Sigmoid colon (tissue), 7 donors: ENCODE measurements at regions of chr18 and their contacts with region 1.

Region 1: GRCh38 chr18:55405893-55406406 is 182.0 kb downstream of the TCF4 start:
- DNase-seq: peak; percentile 92
- H3K4me3 ChIP-seq: no peak overlapping the region
- H3K27ac ChIP-seq: peak overlapping the region; percentile 73 to 83 (median 78)
- H3K4me1 ChIP-seq: peaks cover 0 to 42% (median 16%) of the 10 kb centered on the region in 4 donors
- H3K27me3 ChIP-seq: no peaks in the 10 kb centered on the region
- CTCF ChIP-seq: peak in 1 of 4 experiments; percentile 37
- EP300 ChIP-seq: peak in 2 of 4 donors; percentile 5 to 26
- POLR2A ChIP-seq: no peak

Region 2: GRCh38 chr18:55161916-55162315 is 244.0 kb before region 1 on chr18:
- intact Hi-C with region 1: no loop called
- DNase-seq: no peak
- H3K4me3 ChIP-seq: no peak overlapping the region
- H3K27ac ChIP-seq: no peak overlapping the region
- H3K4me1 ChIP-seq: peaks cover 0 to 11% (median 4%) of the 10 kb centered on the region in 4 donors
- H3K27me3 ChIP-seq: no peaks in the 10 kb centered on the region
- CTCF ChIP-seq: no peak
- EP300 ChIP-seq: no peak
- POLR2A ChIP-seq: no peak

Region 3: DNA sequence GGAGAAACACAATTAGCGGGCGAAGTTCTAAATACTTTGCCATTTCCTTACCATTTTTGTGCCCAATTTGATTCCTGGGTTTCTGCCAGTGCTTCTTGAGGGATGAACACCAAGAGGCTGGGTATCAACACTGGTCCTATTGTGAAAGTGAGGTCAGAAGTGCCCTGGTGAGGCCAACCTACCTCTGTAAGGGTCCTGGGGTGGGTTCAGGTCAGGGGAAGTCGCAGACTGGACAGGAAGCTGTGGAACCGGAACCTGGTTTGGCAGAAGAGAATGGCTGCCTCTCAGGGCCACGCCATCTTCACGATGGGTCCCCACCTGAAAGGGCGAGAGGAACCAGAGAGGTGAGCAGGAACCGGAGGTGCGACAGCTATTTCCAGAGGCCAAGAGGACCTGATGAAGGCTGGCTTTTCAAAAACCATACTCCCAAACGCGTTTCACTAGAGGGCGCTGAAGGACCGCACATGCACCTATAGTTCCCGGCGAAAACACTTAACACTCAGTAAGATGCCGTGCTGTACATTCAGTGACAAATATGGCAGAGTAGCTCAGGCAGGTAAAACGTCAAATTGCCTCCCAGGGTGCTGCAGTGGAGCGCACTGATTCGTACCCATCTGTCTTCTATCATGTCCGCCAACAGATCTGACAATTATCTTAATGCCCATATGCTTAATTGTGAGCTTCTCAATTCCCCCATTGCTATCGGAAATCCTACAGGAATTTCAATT is 171.4 kb before region 1 on chr18:
- intact Hi-C with region 1: loop called (anchors 5 kb)
- DNase-seq: peak; percentile 85
- H3K4me3 ChIP-seq: no peak overlapping the region
- H3K27ac ChIP-seq: peak overlapping the region; percentile 19 to 51 (median 39)
- H3K4me1 ChIP-seq: peaks cover 0 to 17% (median 8%) of the 10 kb centered on the region in 4 donors
- H3K27me3 ChIP-seq: no peaks in the 10 kb centered on the region
- CTCF ChIP-seq: peak; percentile 57 to 77 (median 76)
- EP300 ChIP-seq: no peak
- POLR2A ChIP-seq: no peak

Region 4: DNA sequence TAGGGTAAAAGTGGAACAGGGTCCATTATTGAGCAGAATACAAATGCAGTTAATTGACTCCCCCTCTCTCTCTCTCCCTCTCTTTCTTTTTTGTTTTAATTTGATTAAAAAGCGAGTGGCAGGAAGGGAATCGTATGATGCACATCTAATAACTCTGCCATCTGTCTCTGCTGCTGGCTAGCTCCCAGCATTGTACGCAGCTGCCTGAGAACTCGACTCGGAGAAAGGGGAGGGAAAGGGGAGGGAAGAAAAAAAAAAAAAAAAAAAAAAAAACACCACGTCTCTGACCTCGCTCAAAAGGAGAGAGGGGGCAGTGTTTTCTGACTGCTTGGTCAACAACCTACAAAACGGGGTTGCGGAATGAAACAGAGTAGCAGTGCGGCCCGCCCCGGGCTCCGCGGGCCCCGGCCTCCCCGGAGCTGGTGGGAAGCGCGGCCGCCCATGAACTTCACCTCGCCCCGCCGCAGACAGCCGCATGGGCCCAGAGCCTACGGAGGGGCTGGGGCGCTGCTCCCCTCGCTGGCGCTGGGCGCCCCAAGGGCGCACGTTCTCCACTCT is 83.7 kb before region 1 on chr18:
- intact Hi-C with region 1: loop called (anchors 5 kb)
- DNase-seq: peak; percentile 96
- H3K4me3 ChIP-seq: peak overlapping the region; percentile 48 to 63 (median 56)
- H3K27ac ChIP-seq: peak overlapping the region; percentile 88 to 98 (median 90)
- H3K4me1 ChIP-seq: peaks cover 0 to 36% (median 25%) of the 10 kb centered on the region in 4 donors
- H3K27me3 ChIP-seq: no peaks in the 10 kb centered on the region
- CTCF ChIP-seq: no peak
- EP300 ChIP-seq: peak in 1 of 4 donors; percentile 25
- POLR2A ChIP-seq: peak; percentile 26 to 59

Region 5: GRCh38 chr18:55351980-55352714 is 53.8 kb before region 1 on chr18:
- intact Hi-C with region 1: loop called (anchors 5 kb)
- DNase-seq: no peak
- H3K4me3 ChIP-seq: no peak overlapping the region
- H3K27ac ChIP-seq: peak overlapping the region in 2 of 4 donors; percentile 21 to 54
- H3K4me1 ChIP-seq: peaks cover 0 to 60% (median 42%) of the 10 kb centered on the region in 4 donors
- H3K27me3 ChIP-seq: no peaks in the 10 kb centered on the region
- CTCF ChIP-seq: no peak
- EP300 ChIP-seq: no peak
- POLR2A ChIP-seq: no peak

Region 6: DNA sequence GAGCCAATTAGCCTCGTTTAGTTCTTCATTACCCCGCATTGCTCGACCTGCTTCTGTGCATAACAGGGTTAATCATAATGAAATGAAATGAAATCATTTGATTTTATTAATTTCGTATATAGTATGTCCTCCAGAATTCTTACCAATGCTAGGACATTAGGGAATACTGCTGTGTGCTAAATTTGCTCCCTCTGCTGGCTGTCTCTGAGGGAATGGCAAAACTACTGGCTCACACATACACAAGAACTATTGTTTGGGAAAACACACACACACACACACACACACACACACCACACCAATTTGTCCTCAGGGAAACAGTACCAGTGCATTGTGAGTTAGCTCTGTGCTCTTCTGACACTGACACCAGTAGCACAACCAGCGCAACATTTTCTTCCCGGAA is 455.3 kb after region 1 on chr18:
- intact Hi-C with region 1: loop called (anchors 10 kb)
- DNase-seq: no peak
- H3K4me3 ChIP-seq: no peak overlapping the region
- H3K27ac ChIP-seq: no peak overlapping the region
- H3K4me1 ChIP-seq: peaks cover 0 to 13% (median 1%) of the 10 kb centered on the region in 4 donors
- H3K27me3 ChIP-seq: no peaks in the 10 kb centered on the region
- CTCF ChIP-seq: peak in 1 of 4 experiments; percentile 19
- EP300 ChIP-seq: no peak
- POLR2A ChIP-seq: no peak

Region 7: DNA sequence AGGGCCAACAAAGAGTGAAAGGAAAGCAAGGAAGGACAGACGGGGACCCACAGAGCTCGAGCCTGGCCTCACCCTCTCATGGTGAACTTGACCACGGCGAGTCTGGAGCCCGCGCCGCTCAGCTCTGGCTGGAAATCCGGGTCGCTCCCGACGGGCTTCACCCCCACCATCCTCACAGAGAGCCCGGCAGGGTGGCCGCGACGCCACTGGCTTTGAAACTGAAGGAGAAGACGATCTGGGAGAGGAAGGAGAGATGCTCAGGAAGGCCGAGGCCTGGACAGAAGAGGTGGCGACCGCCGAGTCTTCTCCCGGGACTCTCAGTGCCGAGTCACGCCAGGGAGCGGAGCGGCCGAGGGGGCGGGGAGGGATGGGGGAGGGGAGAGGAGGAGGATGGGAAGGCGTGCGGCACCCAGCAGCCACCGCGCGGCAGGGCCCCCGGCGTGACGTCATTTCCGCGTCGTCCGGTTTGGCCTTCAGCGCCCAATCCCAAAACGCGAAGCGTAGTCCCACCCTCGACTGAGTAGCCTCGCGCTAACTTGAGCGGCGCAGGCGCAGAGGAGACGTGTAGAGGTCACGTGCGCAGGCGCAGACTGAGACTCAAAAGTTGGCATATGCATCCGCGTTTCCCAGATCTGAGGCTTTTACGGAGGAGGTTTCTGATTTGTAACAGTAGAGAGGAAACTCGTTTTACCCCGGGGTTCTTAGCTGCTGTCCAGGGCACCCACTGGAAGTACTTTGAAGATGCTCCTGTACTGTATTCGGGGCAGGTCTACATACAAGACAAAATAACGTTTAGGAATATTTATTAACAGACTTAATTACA is 1232.5 kb after region 1 on chr18 and contains the start of gene TXNL1:
- intact Hi-C with region 1: loop called (anchors 10 kb)
- DNase-seq: peak; percentile 100
- H3K4me3 ChIP-seq: peak within 1 kb of the TSS; percentile 86 to 93 (median 91)
- H3K27ac ChIP-seq: peak within 1 kb of the TSS; percentile 93 to 99 (median 97)
- H3K4me1 ChIP-seq: peaks cover 0 to 37% (median 27%) of the 10 kb centered on the region in 4 donors
- H3K27me3 ChIP-seq: no peaks in the 10 kb centered on the region
- CTCF ChIP-seq: no peak
- EP300 ChIP-seq: peak in 2 of 4 donors; percentile 45 to 81
- POLR2A ChIP-seq: peak; percentile 81 to 85
- total RNA-seq, gene TXNL1: 39.8 to 47.9 (median 46.1) TPM